PC-3 (cell line): ENCODE measurements at regions of chr6 and their contacts with region 1.

Region 1: DNA sequence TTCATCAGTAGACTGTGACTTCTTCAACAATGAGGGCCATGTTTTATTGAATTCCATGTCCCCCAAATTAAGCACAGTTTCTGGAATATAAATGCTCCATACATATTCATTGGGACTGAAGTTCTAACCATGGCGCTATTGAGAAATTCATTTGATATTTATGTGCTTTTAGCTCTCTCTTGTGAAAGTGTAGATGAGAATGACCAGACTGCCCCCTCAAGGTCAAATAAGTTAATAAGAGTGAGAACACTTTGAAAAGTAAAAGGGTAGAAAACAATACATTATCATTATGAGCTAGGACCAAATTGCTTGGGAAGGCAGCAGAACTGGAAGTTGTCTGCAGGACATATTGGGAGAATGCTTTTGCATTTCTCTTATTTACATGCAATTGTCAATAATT is 597.9 kb downstream of the EPM2A start:
- DNase-seq: peak; percentile 42
- ATAC-seq: peak; percentile 35; the same call in 1 of the 2 replicates
- H3K4me3 ChIP-seq: no peak overlapping the region
- H3K27ac ChIP-seq: no peak overlapping the region
- H3K4me1 ChIP-seq: no peaks in the 10 kb centered on the region
- H3K27me3 ChIP-seq: no peaks in the 10 kb centered on the region
- CTCF ChIP-seq: peak; percentile 61

Region 2: DNA sequence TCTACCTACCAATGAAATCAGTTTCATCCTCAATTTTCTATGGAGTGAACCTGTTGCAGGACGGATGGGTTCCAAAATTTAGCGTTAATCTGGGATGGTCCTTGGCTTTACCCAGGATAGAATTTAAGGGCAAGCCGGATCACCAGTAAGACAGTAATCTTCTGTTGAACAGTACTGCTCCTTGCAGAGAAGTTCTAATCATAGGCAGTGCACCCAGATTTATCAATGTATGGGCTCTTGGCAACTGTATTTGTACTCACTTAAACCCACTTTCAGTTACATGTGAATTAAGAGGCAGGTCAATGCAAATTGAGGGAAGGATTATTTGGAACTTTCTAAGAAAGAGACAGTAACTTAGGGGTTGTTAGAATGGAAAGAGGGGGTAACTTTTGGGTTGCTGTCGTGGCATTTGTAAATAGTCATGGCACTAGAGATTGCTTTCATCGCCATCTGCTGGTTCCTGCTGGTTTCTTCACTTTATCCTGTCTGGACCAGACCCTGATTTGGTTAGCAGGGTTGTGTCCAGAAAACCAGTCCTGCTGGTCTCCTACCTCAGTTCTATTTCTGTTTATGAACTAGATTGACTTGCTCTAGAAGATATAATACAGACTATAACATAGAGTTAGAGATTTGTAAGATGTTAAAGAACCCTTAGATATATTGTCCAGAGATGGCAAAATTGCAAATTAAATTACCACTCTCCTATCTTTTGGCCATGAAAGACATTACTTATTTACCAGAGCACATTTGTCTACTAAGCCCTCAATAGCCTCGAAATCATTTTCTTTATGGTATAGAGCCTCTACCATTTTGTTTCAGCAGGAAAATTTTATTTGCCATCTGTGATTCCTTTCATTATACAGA is 206.0 kb before region 1 on chr6:
- CTCF ChIA-PET with region 1: interaction called, 3 read pairs
- POLR2A ChIA-PET with region 1: no interaction called
- intact Hi-C with region 1: loop called (anchors 5 kb)
- DNase-seq: peak; percentile 66
- ATAC-seq: peak; percentile 67
- H3K4me3 ChIP-seq: no peak overlapping the region
- H3K27ac ChIP-seq: peak overlapping the region; percentile 36
- H3K4me1 ChIP-seq: no peaks in the 10 kb centered on the region
- H3K27me3 ChIP-seq: no peaks in the 10 kb centered on the region
- CTCF ChIP-seq: peak; percentile 71

Region 3: GRCh38 chr6:145025488-145025887 is 111.9 kb before region 1 on chr6:
- CTCF ChIA-PET with region 1: no interaction called
- POLR2A ChIA-PET with region 1: no interaction called
- intact Hi-C with region 1: no loop called
- DNase-seq: no peak
- ATAC-seq: no peak
- H3K4me3 ChIP-seq: no peak overlapping the region
- H3K27ac ChIP-seq: no peak overlapping the region
- H3K4me1 ChIP-seq: peaks cover 6% of the 10 kb centered on the region
- H3K27me3 ChIP-seq: no peaks in the 10 kb centered on the region
- CTCF ChIP-seq: no peak